Activated T-helper 2 cell treated with anti-CD3 and anti-CD28 coated beads, Interferon-gamma antibody, Interleukin-2, Interleukin-4, amounts not matched to agents 10 μg/mL and 5 μg/mL and 100 μg/mL, durations not matched to agents 14 hours and 24 hours and 36 hours (primary cell): ENCODE measurements at regions of chr12 and their contacts with region 1.

Region 1: DNA sequence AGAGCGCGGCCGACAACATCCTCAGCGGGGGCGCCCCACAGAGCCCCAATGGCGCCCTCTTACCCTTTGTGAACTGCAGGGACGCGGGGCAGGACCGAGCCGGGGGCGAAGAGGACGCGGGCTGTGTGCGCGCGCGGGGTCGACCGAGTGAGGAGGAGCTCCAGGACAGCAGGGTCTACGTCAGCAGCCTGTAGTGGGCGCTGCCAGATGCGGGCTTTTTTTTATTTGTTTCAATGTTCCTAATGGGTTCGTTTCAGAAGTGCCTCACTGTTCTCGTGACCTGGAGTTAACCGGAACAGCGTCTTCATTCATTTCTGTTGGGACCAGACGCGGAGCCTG is 103.8 kb upstream of the FKBP4 start:
- DNase-seq: peak; percentile 59
- H3K4me3 Mint-ChIP-seq: peak overlapping the region; percentile 81
- H3K27ac Mint-ChIP-seq: peak overlapping the region; percentile 87
- H3K4me1 Mint-ChIP-seq: peaks cover 32% of the 10 kb centered on the region
- H3K27me3 Mint-ChIP-seq: peaks cover 4% of the 10 kb centered on the region

Region 2: GRCh38 chr12:2752676-2753371 is 61.8 kb after region 1 on chr12:
- intact Hi-C with region 1: loop called (anchors 5 kb)
- DNase-seq: peak; percentile 79
- H3K4me3 Mint-ChIP-seq: no peak overlapping the region
- H3K27ac Mint-ChIP-seq: no peak overlapping the region
- H3K4me1 Mint-ChIP-seq: peaks cover 3% of the 10 kb centered on the region
- H3K27me3 Mint-ChIP-seq: peaks cover 20% of the 10 kb centered on the region

Region 3: DNA sequence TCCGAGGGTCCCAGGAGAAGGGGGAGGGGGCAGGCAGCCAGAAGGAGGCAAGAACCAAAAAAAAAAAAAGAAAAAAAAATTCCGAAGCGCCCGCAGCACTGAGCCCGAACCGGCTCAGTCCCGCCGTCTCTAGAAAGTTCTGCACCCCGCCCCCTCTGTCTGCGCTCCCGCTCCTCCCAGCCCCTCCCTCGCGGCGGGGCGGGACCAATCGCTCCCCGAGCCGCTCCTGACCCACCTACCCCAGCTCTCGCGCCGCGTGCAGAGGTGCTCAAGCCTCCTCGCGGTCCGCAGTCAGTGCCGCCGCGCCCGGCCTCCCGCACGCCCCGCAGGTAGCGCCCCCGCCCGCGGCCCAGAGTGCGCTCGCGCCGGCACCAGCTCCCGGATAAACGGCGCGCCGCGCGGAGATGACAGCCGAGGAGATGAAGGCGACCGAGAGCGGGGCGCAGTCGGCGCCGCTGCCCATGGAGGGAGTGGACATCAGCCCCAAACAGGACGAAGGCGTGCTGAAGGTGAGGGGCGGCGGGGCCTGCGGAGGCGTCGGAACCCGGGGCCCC is 103.8 kb after region 1 on chr12 and contains the start of gene FKBP4:
- intact Hi-C with region 1: loop called (anchors 2 kb)
- DNase-seq: peak; percentile 84
- H3K4me3 Mint-ChIP-seq: peak within 1 kb of the TSS; percentile 85
- H3K27ac Mint-ChIP-seq: peak within 1 kb of the TSS; percentile 22
- H3K4me1 Mint-ChIP-seq: peaks cover 13% of the 10 kb centered on the region
- H3K27me3 Mint-ChIP-seq: peaks cover 17% of the 10 kb centered on the region
- total RNA-seq, gene FKBP4: 219 and 233 TPM in 2 replicates